Heart left ventricle (tissue), 16 donors: ENCODE measurements at regions of chr19 and their contacts with region 1.

Region 1: DNA sequence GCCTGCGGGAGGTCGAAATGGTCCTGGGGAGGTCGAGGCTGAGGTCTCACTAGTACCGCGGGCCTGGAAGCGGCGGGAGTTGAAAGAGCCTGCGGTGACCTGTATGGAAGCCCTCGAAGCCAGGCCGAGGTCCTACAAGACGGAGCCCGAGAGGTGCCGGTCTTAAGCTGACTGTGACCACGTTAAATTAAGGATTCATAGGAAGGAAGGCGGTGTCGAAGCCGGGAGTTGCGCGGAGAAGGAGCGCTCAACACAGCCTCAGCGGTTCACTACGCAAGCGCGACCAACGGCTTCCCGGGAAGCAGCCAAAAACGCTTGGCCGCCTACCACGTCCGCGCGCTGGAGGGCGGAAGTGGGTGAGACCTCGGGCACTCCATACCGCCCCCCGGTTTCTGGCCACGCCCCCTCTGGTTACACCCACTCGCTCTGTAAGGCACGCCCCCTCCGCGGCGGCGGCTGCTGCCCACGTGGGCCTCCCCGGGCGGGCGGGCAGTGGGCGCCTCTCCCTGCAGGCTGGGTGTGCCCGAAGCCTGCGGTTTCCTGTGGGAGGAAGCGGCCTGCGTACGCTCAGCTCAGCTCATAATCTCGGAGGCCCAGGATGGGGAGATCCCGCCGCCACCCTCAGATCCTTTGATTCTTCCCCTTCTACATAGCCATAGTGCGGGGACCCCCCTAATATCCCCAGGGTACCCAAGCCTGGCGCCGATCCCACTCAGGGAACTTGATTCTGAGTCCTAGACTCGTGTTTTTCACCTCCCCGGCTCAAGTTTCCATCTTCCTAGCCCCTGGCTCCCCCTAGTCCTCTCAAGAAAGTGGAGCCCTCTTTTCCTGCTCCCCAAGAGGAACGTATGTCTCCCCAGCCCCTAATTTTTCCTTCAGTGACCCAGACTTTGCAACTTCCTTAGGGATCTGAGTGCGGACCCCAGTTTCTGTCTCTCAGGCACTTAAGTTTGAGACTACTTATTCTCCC is 3.4 kb upstream of the EMP3 start:
- DNase-seq: peak; percentile 99 to 100 (median 99)
- ATAC-seq: peak; percentile 89 to 93 (median 92)
- H3K4me3 ChIP-seq: peak overlapping the region; percentile 30 to 77 (median 60)
- H3K27ac ChIP-seq: peak overlapping the region; percentile 79 to 100 (median 98)
- H3K4me1 ChIP-seq: peaks cover 0 to 60% (median 33%) of the 10 kb centered on the region in 12 donors
- H3K27me3 ChIP-seq: no peaks in the 10 kb centered on the region
- CTCF ChIP-seq: peak in 8 of 12 donors; percentile 12 to 45 (median 20)
- POLR2A ChIP-seq: peak in 1 of 2 donors; percentile 86

Region 2: GRCh38 chr19:48271531-48272151 is 50.3 kb before region 1 on chr19:
- intact Hi-C with region 1: no loop called
- DNase-seq: peak; percentile 39 to 60 (median 49)
- ATAC-seq: peak; percentile 56 to 82 (median 77)
- H3K4me3 ChIP-seq: peak overlapping the region; percentile 39 to 73 (median 57)
- H3K27ac ChIP-seq: peak overlapping the region; percentile 25 to 81 (median 62)
- H3K4me1 ChIP-seq: peaks cover 0 to 16% (median 8%) of the 10 kb centered on the region in 12 donors
- H3K27me3 ChIP-seq: peaks cover 0 to 5% (median 0%) of the 10 kb centered on the region in 9 donors
- CTCF ChIP-seq: no peak
- POLR2A ChIP-seq: no peak

Region 3: DNA sequence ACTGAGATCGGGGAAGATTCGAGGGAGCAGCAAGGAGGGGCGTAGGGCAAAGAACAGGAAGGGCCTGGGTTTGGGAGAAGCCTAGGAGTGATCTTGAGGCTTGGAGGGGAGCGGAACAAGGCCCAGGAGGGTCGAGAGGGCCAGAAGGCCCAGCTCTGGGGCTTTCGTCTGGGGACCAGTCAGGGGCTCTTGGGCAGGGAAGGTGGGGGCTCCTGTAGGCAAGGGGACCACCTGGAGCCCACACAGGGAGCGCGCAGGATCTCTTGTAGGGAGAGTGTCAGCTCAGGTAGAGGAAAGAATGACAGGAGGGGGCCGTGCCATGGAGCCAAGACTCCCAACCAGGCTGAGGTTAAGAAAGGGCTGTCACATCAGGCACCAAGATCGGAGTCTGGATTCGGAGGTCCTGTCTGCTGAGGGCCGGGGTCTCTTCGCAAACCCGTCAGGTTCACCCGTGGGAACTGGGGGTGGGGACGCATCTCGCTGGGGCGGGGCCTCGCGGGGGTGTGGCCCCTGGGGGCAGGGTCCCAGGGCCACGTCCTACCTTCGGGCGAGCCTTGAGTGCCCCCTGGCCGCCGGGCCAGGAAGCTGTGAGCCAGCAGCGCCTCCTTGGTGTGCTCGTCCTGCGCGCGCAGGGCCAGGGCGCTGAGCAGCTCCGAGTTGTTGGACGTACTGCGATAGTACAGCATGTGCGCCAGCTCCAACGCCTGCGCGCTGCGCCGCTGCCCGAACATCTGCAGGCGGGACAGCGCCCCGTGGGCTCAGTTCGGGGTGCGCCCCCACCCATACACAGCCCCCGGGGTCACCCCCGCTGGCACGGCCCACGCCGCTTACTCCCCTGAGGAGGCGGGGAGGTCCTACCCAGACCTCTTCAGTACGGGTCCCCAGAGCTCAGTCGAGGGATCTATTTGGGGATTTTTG is 11.8 kb after region 1 on chr19:
- intact Hi-C with region 1: loop called in 4 of 10 experiments (anchors 1 to 2 kb)
- DNase-seq: peak; percentile 88 to 97 (median 93)
- ATAC-seq: peak; percentile 68 to 87 (median 86)
- H3K4me3 ChIP-seq: peak overlapping the region; percentile 9 to 63 (median 50)
- H3K27ac ChIP-seq: peak overlapping the region; percentile 51 to 93 (median 87)
- H3K4me1 ChIP-seq: peaks cover 0 to 57% (median 25%) of the 10 kb centered on the region in 12 donors
- H3K27me3 ChIP-seq: no peaks in the 10 kb centered on the region
- CTCF ChIP-seq: peak; percentile 72 to 96 (median 87)
- POLR2A ChIP-seq: no peak

Region 4: DNA sequence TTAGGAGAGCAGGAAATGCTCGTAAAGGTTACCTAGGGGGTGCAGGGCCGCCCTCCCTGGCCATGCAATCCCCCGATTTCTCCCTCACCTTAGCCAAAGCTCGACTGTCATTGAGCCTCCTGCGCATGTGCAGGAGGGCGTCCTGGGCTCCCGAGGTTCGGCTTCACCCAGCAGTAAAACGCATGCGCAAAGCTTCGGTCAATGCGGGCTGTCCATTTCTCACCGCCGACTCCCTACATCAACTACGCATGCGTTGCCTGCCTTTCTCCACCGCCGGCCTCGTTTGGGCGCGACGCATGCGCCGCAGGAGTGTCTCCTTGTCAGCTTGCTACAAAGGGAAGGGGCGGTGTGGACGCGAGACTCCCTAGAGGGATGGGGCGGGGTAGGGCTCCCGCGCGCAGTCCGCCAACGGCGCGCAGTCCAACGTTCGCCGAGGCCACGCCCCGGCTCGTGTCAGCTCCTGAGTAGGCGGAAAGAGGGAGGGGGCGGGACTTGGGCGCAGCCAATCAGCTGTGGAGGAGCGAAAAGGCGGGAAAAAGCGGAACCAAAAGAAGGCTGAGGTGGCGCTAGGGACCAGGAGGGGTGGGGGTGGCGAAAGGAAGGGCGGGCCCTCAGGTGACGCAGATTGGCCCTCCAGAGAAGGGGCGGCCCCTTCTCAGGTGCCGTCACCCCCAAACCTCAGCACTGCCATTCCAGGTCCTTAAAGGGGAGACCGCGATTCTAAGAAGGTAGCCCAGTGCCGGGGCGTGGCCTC is 42.1 kb after region 1 on chr19 and contains the starts of genes SYNGR4 and TMEM143:
- intact Hi-C with region 1: loop called in 3 of 10 experiments (anchors 5 kb)
- DNase-seq: peak; percentile 99 to 100 (median 99)
- ATAC-seq: peak; percentile 95 to 97 (median 96)
- H3K4me3 ChIP-seq: peak within 1 kb of the TSS; percentile 57 to 85 (median 68)
- H3K27ac ChIP-seq: peak within 1 kb of the TSS; percentile 82 to 100 (median 95)
- H3K4me1 ChIP-seq: peaks cover 0 to 18% (median 5%) of the 10 kb centered on the region in 12 donors
- H3K27me3 ChIP-seq: no peaks in the 10 kb centered on the region
- CTCF ChIP-seq: no peak
- POLR2A ChIP-seq: peak in 1 of 2 donors; percentile 59
- total RNA-seq, gene SYNGR4: not detected
- total RNA-seq, gene TMEM143: 28.3 to 96.1 (median 66.2) TPM

Region 5: DNA sequence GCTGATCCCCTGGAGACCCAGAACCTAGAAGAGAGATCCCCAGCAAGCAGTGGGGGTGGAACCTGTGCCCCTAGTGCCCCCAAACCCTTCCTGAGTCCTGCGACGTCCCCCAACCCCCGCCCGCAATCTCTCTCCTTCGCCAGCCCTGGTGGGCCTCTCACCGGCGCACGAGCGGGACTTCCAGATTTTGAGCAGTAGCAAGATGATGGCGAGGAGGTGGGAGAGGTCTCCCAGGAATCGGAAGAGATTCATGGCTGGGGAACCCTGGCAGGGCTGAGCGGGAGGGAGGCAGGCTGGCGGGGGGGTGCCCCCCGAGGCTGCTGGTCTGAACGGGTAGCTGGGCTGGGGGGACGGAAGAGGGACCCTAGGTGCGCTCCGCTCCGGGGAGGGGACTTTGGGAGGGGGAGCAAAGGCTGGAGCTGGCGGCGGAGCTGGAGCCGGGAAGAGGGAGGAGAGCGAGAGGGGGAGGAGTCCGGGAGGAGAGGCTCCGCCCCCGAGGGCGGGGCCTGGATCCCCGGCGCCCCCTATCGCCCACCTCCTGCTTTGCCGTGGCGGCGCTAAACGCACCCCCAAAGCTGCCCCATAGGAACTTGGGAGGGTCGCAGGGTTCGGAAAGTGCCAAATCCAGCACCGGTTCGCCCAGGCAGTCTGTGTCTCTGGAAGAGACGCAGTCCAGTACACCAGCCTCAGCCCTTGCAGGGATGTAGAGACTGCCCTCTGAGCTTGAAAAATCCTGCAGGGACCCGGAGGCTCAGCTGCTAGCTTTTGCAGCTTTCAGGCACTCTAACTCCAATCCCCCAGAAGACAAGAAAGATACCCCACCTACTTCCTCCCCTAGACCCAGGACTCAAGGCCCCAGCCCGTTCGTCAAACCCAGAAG is 69.4 kb after region 1 on chr19 and contains the start of gene KDELR1:
- intact Hi-C with region 1: loop called in 2 of 10 experiments (anchors 2 to 5 kb)
- DNase-seq: peak; percentile 78 to 92 (median 80)
- ATAC-seq: peak; percentile 89 to 96 (median 93)
- H3K4me3 ChIP-seq: peak within 1 kb of the TSS; percentile 77 to 99 (median 90)
- H3K27ac ChIP-seq: peak within 1 kb of the TSS; percentile 67 to 97 (median 87)
- H3K4me1 ChIP-seq: peaks cover 0 to 28% (median 11%) of the 10 kb centered on the region in 12 donors
- H3K27me3 ChIP-seq: peaks cover 15 to 43% (median 35%) of the 10 kb centered on the region in 9 donors
- CTCF ChIP-seq: peak; percentile 85 to 97 (median 91)
- POLR2A ChIP-seq: peak in 1 of 2 donors; percentile 61
- total RNA-seq, gene KDELR1: 64.5 to 109 (median 79.1) TPM

Region 6: DNA sequence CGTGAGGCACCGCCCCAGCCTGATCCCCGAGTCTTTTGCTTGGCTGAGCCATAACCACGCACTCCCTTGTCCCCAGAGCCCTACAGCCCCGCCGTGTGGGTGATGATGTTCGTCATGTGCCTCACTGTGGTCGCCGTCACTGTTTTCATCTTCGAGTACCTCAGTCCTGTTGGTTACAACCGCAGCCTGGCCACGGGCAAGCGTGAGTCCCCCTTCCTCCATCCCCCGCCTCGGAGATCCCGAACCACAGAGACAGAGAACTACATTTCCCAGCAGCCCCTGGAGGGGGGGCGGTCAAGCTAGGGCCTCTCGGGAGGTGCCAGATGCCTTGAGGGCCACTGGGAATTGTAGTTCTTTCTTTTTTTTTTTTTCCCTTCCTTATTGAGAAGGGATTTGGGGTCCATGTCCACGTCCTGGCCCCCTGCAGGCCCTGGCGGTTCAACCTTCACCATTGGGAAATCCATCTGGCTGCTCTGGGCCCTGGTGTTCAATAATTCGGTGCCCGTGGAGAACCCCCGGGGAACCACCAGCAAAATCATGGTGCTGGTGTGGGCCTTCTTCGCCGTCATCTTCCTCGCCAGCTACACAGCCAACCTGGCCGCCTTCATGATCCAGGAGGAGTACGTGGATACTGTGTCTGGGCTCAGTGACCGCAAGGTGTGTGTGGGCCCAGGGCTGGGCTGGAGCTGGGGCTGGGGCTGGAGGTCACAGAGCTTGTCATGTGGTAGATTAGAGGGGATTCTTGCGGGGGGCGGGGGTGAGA is 97.4 kb after region 1 on chr19:
- intact Hi-C with region 1: no loop called
- DNase-seq: peak in 3 of 5 donors; percentile 40 to 72 (median 51)
- ATAC-seq: peak in 3 of 4 donors; percentile 46 to 59 (median 54)
- H3K4me3 ChIP-seq: peak overlapping the region in 1 of 12 donors; percentile 28
- H3K27ac ChIP-seq: no peak overlapping the region
- H3K4me1 ChIP-seq: peaks cover 0 to 18% (median 0%) of the 10 kb centered on the region in 12 donors
- H3K27me3 ChIP-seq: peaks cover 0 to 18% (median 0%) of the 10 kb centered on the region in 9 donors
- CTCF ChIP-seq: no peak
- POLR2A ChIP-seq: no peak

Region 7: DNA sequence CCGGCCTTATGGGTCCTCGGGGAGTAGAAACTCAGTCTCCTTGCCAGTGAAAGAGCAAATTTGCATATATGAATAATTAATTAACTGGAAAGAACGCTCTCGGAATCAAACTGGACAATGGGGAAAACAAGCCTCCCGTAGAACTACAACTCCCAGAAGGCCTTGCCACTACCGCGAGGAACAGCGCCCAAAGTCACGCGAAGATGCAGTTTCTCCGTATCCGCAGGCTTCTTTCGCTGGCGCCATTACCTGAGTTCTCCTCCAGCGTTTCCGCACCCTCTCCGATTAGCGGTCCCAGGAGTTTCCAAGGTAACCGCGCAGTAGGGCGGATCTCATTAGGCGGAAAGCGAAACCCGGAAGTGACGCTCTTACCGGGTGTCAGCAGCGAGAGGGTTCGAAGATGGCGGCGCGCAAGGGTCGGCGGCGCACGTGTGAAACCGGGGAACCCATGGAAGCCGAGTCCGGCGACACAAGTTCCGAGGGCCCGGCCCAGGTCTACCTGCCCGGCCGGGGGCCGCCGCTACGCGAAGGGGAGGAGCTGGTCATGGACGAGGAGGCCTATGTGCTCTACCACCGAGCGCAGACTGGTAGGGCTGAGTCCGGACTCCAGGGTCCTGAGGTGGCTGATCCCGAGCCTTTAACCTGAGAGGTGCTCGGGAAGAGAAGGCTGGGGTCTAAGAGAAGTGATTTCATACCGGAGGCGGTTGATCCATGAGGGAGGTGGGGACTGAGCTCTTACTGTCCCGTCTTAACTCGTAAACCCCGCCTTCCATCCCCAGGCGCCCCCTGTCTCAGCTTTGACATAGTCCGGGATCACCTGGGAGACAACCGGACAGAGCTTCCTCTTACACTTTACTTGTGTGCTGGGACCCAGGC is 123.9 kb after region 1 on chr19 and contains the start of gene GRWD1:
- intact Hi-C with region 1: loop called in 1 of 10 experiments (anchors 5 kb)
- DNase-seq: peak; percentile 88 to 93 (median 91)
- ATAC-seq: peak; percentile 88 to 95 (median 91)
- H3K4me3 ChIP-seq: peak within 1 kb of the TSS; percentile 60 to 98 (median 89)
- H3K27ac ChIP-seq: peak within 1 kb of the TSS; percentile 12 to 94 (median 88)
- H3K4me1 ChIP-seq: peaks cover 0 to 27% (median 19%) of the 10 kb centered on the region in 12 donors
- H3K27me3 ChIP-seq: peaks cover 4 to 28% (median 15%) of the 10 kb centered on the region in 9 donors
- CTCF ChIP-seq: peak in 2 of 12 donors; percentile 3 to 7
- POLR2A ChIP-seq: peak in 1 of 2 donors; percentile 47
- total RNA-seq, gene GRWD1: 13.9 to 24.7 (median 19.0) TPM

Region 8: GRCh38 chr19:48492925-48493717 is 171.2 kb after region 1 on chr19:
- intact Hi-C with region 1: loop called in 1 of 10 experiments (anchors 5 kb)
- DNase-seq: peak; percentile 95 to 97 (median 97)
- ATAC-seq: peak; percentile 89 to 92 (median 90)
- H3K4me3 ChIP-seq: peak overlapping the region; percentile 23 to 78 (median 61)
- H3K27ac ChIP-seq: peak overlapping the region in 11 of 12 donors; percentile 29 to 77 (median 66)
- H3K4me1 ChIP-seq: peaks cover 0 to 39% (median 10%) of the 10 kb centered on the region in 12 donors
- H3K27me3 ChIP-seq: peaks cover 0 to 32% (median 1%) of the 10 kb centered on the region in 9 donors
- CTCF ChIP-seq: no peak
- POLR2A ChIP-seq: peak in 1 of 2 donors; percentile 63